Kidney (tissue), 22 donors: ENCODE measurements at regions of chr1 and their contacts with region 1.

Region 1: GRCh38 chr1:178532392-178532791 is 19.5 kb downstream of the TEX35 start:
- DNase-seq: peak; percentile 86 to 89 (median 88)
- H3K4me3 ChIP-seq: no peak overlapping the region
- H3K27ac ChIP-seq: no peak overlapping the region
- H3K4me1 ChIP-seq: peaks cover 0 to 2% (median 0%) of the 10 kb centered on the region in 3 donors
- H3K27me3 ChIP-seq: no peaks in the 10 kb centered on the region
- CTCF ChIP-seq: peak; percentile 89

Region 2: GRCh38 chr1:178388418-178389145 is 143.8 kb before region 1 on chr1:
- intact Hi-C with region 1: no loop called
- DNase-seq: peak in 1 of 5 donors; percentile 17
- H3K4me3 ChIP-seq: no peak overlapping the region
- H3K27ac ChIP-seq: no peak overlapping the region
- H3K4me1 ChIP-seq: no peaks in the 10 kb centered on the region
- H3K27me3 ChIP-seq: no peaks in the 10 kb centered on the region
- CTCF ChIP-seq: no peak

Region 3: GRCh38 chr1:178612261-178612660 is 79.9 kb after region 1 on chr1:
- intact Hi-C with region 1: no loop called
- DNase-seq: no peak
- H3K4me3 ChIP-seq: no peak overlapping the region
- H3K27ac ChIP-seq: no peak overlapping the region
- H3K4me1 ChIP-seq: no peaks in the 10 kb centered on the region
- H3K27me3 ChIP-seq: no peaks in the 10 kb centered on the region
- CTCF ChIP-seq: no peak

Region 4: GRCh38 chr1:178749581-178750166 is 217.3 kb after region 1 on chr1:
- intact Hi-C with region 1: loop called (anchors 10 kb)
- DNase-seq: no peak
- H3K4me3 ChIP-seq: no peak overlapping the region
- H3K27ac ChIP-seq: no peak overlapping the region
- H3K4me1 ChIP-seq: no peaks in the 10 kb centered on the region
- H3K27me3 ChIP-seq: no peaks in the 10 kb centered on the region
- CTCF ChIP-seq: no peak

Region 5: DNA sequence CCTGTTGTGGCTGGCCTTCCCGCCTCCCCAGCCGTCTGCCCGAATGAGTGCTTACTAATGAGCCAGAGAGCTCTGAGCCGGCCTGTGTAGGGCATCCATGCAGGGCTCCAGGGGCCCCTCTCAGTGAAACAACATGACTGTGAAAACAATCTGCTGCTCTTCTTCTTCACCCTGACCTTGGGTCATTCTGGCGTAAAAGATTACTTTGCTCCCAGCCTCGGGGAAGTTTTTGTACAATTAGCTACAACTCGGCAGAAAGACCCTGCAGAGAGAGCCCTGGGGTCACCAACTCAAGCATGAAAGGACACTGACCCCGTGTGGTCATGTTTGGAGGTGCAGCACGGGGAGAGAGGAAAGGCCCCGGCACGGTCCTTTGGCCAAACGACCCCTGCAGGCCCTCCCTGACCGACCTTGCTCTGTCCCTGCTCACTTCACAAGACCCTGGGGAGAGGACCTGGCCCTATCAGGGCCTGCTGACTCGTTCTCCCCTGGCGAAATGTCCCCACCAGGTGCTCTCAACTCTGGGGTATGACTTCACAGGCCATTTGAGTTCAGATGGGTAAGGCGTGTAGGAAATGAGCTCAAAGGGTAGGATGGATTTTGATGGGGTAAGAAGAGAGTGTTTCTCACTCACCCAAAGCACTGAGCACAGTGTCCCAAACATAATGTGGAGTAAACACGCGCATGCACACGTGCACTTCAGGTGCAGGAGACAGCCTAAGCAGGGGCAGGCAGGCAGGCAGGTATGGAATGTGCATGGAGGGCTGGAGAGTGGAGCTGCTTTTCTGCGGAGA is 470.4 kb after region 1 on chr1:
- intact Hi-C with region 1: loop called (anchors 5 kb)
- DNase-seq: peak; percentile 86 to 93 (median 90)
- H3K4me3 ChIP-seq: peak overlapping the region in 1 of 3 donors; percentile 21
- H3K27ac ChIP-seq: no peak overlapping the region
- H3K4me1 ChIP-seq: peaks cover 0 to 6% (median 5%) of the 10 kb centered on the region in 3 donors
- H3K27me3 ChIP-seq: no peaks in the 10 kb centered on the region
- CTCF ChIP-seq: peak; percentile 91